Adrenal gland (tissue), 19 donors: ENCODE measurements at regions of chr2 and their contacts with region 1.

Region 1: GRCh38 chr2:227406177-227407031 is 18.7 kb upstream of the SCYGR1 start:
- DNase-seq: peak; percentile 75 to 91 (median 82)
- H3K4me3 ChIP-seq: no peak overlapping the region
- H3K27ac ChIP-seq: peak overlapping the region; percentile 52 to 95 (median 76)
- H3K4me1 ChIP-seq: peaks cover 10 to 16% of the 10 kb centered on the region in 2 donors
- H3K27me3 ChIP-seq: no peaks in the 10 kb centered on the region
- CTCF ChIP-seq: peak; percentile 42 to 86 (median 74)
- POLR2A ChIP-seq: no peak

Region 2: DNA sequence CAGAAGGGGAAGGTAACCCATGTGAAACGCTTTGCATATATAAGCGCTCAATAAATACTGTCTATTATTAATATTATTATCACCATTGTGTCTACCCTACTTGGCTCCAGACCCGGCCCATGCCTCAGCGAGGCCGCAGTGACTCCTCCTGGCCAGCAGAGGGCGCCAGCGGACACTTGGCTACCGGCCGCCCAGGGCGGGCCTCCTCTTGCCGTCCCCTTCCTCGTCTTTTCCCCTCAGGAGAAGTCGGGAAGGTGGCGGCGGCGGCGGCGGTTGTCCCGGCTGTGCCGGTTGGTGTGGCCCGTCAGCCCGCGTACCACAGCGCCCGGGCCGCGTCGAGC is 65.5 kb after region 1 on chr2 and contains the start of gene AGFG1:
- intact Hi-C with region 1: loop called in 1 of 2 experiments (anchors 5 kb)
- DNase-seq: peak; percentile 76 to 93 (median 84)
- H3K4me3 ChIP-seq: peak within 1 kb of the TSS in 3 of 4 donors; percentile 78 to 99 (median 95)
- H3K27ac ChIP-seq: peak within 1 kb of the TSS; percentile 46 to 97 (median 88)
- H3K4me1 ChIP-seq: peaks cover 20 to 44% of the 10 kb centered on the region in 2 donors
- H3K27me3 ChIP-seq: no peaks in the 10 kb centered on the region
- CTCF ChIP-seq: peak; percentile 92 to 100 (median 98)
- POLR2A ChIP-seq: peak; percentile 72 to 88
- total RNA-seq, gene AGFG1: 40.1 to 117 (median 66.0) TPM

Region 3: GRCh38 chr2:227491386-227491785 is 85.0 kb after region 1 on chr2:
- intact Hi-C with region 1: no loop called
- DNase-seq: no peak
- H3K4me3 ChIP-seq: no peak overlapping the region
- H3K27ac ChIP-seq: no peak overlapping the region
- H3K4me1 ChIP-seq: peaks cover 5 to 29% of the 10 kb centered on the region in 2 donors
- H3K27me3 ChIP-seq: no peaks in the 10 kb centered on the region
- CTCF ChIP-seq: no peak
- POLR2A ChIP-seq: no peak

Region 4: GRCh38 chr2:227766373-227766883 is 360.0 kb after region 1 on chr2:
- intact Hi-C with region 1: loop called (anchors 5 kb)
- DNase-seq: peak; percentile 80 to 93 (median 87)
- H3K4me3 ChIP-seq: no peak overlapping the region
- H3K27ac ChIP-seq: no peak overlapping the region
- H3K4me1 ChIP-seq: peaks cover 4 to 6% of the 10 kb centered on the region in 2 donors
- H3K27me3 ChIP-seq: no peaks in the 10 kb centered on the region
- CTCF ChIP-seq: peak; percentile 79 to 93 (median 90)
- POLR2A ChIP-seq: no peak